CD4-positive, alpha-beta T cell (primary cell): ENCODE measurements at regions of chr1 and their contacts with region 1.

Region 1: GRCh38 chr1:19762175-19762779 is 37.4 kb downstream of the TMCO4 start:
- DNase-seq: peak in 10 of 14 experiments; percentile 4 to 52 (median 20)
- ATAC-seq: no peak
- H3K4me3 ChIP-seq: no peak overlapping the region
- H3K4me3 Mint-ChIP-seq: no peak overlapping the region
- H3K27ac ChIP-seq: no peak overlapping the region
- H3K27ac Mint-ChIP-seq: no peak overlapping the region
- H3K4me1 ChIP-seq: no peaks in the 10 kb centered on the region
- H3K4me1 Mint-ChIP-seq: peaks cover 9% of the 10 kb centered on the region
- H3K27me3 ChIP-seq: no peaks in the 10 kb centered on the region
- H3K27me3 Mint-ChIP-seq: no peaks in the 10 kb centered on the region
- CTCF ChIP-seq: peak; percentile 58

Region 2: GRCh38 chr1:19529664-19530063 is 232.6 kb before region 1 on chr1:
- CTCF ChIA-PET with region 1: no interaction called
- POLR2A ChIA-PET with region 1: no interaction called
- intact Hi-C with region 1: no loop called
- DNase-seq: no peak
- ATAC-seq: no peak
- H3K4me3 ChIP-seq: no peak overlapping the region
- H3K4me3 Mint-ChIP-seq: no peak overlapping the region
- H3K27ac ChIP-seq: no peak overlapping the region
- H3K27ac Mint-ChIP-seq: no peak overlapping the region
- H3K4me1 ChIP-seq: peaks cover 4% of the 10 kb centered on the region
- H3K4me1 Mint-ChIP-seq: peaks cover 4% of the 10 kb centered on the region
- H3K27me3 ChIP-seq: no peaks in the 10 kb centered on the region
- H3K27me3 Mint-ChIP-seq: no peaks in the 10 kb centered on the region
- CTCF ChIP-seq: no peak

Region 3: GRCh38 chr1:19577036-19577435 is 185.2 kb before region 1 on chr1:
- CTCF ChIA-PET with region 1: no interaction called
- POLR2A ChIA-PET with region 1: no interaction called
- intact Hi-C with region 1: no loop called
- DNase-seq: no peak
- ATAC-seq: no peak
- H3K4me3 ChIP-seq: no peak overlapping the region
- H3K4me3 Mint-ChIP-seq: no peak overlapping the region
- H3K27ac ChIP-seq: no peak overlapping the region
- H3K27ac Mint-ChIP-seq: no peak overlapping the region
- H3K4me1 ChIP-seq: peaks cover 2% of the 10 kb centered on the region
- H3K4me1 Mint-ChIP-seq: peaks cover 2% of the 10 kb centered on the region
- H3K27me3 ChIP-seq: no peaks in the 10 kb centered on the region
- H3K27me3 Mint-ChIP-seq: no peaks in the 10 kb centered on the region
- CTCF ChIP-seq: no peak

Region 4: DNA sequence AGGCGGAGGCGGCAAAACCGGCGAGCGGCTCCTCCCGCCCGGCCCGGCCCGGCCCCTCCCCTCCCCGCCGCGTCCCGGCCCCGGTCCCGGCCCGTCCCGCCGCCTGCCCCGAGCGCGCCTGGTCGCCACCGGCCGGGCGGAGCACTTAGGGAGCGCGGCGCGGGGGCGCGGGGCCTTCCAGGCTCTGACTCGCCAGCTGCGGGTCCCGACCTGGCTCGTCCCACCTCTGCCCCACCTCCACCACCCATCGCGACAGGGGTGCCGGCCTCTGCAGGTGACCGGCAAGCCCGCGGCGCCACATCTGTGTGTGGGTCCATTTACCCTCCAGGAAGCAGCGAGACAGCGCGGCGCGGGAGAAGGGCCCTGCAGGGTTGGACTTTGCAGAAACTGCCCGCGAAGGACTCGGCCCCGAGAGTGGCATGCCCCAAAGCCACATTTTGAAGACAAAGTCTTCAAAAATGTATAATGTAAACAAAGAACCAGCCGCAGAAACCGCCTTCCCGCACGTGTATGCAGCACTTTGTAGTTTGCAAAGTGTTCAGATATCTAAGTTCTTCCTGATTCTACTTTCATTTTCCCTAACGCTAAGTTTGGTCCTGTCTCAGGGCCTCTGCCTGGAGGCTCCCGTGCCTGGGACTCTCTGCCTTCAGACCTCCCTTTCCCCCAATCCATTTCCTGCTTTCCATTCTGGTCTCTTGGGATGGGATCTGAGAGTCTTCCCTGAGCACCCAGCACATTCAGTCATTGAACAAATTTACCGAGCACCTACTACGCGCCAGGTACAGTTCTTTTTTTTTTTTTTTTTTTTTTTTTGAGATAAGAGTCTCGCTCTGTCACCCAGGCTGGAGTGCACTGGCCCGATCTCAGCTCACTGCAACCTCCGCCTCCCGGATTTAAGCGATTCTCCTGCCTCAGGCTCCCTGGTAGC is 37.9 kb after region 1 on chr1 and contains the start of gene TMCO4:
- CTCF ChIA-PET with region 1: no interaction called
- POLR2A ChIA-PET with region 1: no interaction called
- intact Hi-C with region 1: no loop called
- DNase-seq: peak; percentile 20 to 69 (median 38)
- ATAC-seq: peak; percentile 66
- H3K4me3 ChIP-seq: peak within 1 kb of the TSS; percentile 90
- H3K4me3 Mint-ChIP-seq: peak within 1 kb of the TSS; percentile 96
- H3K27ac ChIP-seq: peak within 1 kb of the TSS; percentile 65 to 85
- H3K27ac Mint-ChIP-seq: peak within 1 kb of the TSS; percentile 95
- H3K4me1 ChIP-seq: peaks cover 30% of the 10 kb centered on the region
- H3K4me1 Mint-ChIP-seq: peaks cover 31% of the 10 kb centered on the region
- H3K27me3 ChIP-seq: no peaks in the 10 kb centered on the region
- H3K27me3 Mint-ChIP-seq: no peaks in the 10 kb centered on the region
- CTCF ChIP-seq: no peak
- total RNA-seq, gene TMCO4: 12.4 to 13.9 TPM

Region 5: GRCh38 chr1:19811206-19811851 is 49.1 kb after region 1 on chr1:
- CTCF ChIA-PET with region 1: interaction called, 3 read pairs
- POLR2A ChIA-PET with region 1: no interaction called
- intact Hi-C with region 1: loop called in 1 of 2 experiments (anchors 1 kb)
- DNase-seq: peak; percentile 9 to 66 (median 34)
- ATAC-seq: peak; percentile 29
- H3K4me3 ChIP-seq: no peak overlapping the region
- H3K4me3 Mint-ChIP-seq: no peak overlapping the region
- H3K27ac ChIP-seq: no peak overlapping the region
- H3K27ac Mint-ChIP-seq: no peak overlapping the region
- H3K4me1 ChIP-seq: no peaks in the 10 kb centered on the region
- H3K4me1 Mint-ChIP-seq: no peaks in the 10 kb centered on the region
- H3K27me3 ChIP-seq: no peaks in the 10 kb centered on the region
- H3K27me3 Mint-ChIP-seq: no peaks in the 10 kb centered on the region
- CTCF ChIP-seq: peak; percentile 57

Region 6: GRCh38 chr1:19974822-19975416 is 212.6 kb after region 1 on chr1:
- CTCF ChIA-PET with region 1: no interaction called
- POLR2A ChIA-PET with region 1: no interaction called
- intact Hi-C with region 1: no loop called
- DNase-seq: peak in 5 of 14 experiments; percentile 5 to 52 (median 36)
- ATAC-seq: no peak
- H3K4me3 ChIP-seq: no peak overlapping the region
- H3K4me3 Mint-ChIP-seq: no peak overlapping the region
- H3K27ac ChIP-seq: no peak overlapping the region
- H3K27ac Mint-ChIP-seq: no peak overlapping the region
- H3K4me1 ChIP-seq: no peaks in the 10 kb centered on the region
- H3K4me1 Mint-ChIP-seq: no peaks in the 10 kb centered on the region
- H3K27me3 ChIP-seq: peaks cover 0 to 6% of the 10 kb centered on the region in 2 experiments
- H3K27me3 Mint-ChIP-seq: peaks cover 51% of the 10 kb centered on the region
- CTCF ChIP-seq: no peak